ENCODE measurements at regions of chr12 and their contacts with region 1.

Region 1: DNA sequence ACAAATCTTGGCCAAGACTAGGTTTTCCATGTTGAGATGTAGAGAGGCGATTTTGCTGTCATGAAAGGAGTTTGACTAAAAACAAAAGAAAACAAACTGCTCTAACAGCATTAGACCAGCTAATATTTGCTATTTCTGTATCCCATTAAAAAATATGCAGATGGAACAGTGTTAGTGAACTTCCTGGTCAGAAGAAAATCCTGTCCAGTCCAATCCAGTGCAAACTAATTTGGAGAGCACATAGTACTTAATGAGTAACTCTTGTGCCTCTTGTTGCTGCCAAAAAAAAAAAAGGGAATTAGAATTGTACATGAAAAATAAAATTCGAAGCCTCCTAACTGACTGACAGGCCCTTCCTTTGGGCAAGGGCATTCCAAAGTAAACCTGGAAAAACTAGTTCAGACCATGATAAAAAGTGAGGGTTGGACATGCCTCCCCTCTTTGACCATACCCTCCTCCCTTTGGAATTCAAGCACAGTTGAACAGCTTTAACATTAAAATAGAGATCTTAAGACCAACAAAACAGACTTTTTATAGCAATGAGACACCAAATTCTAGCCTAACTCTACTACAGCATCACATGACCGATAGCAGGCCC is 298.9 kb downstream of the ETNK1 start:
- DNase-seq: no peak
- H3K4me3 Mint-ChIP-seq: no peak overlapping the region
- H3K27ac Mint-ChIP-seq: no peak overlapping the region
- H3K4me1 Mint-ChIP-seq: no peaks in the 10 kb centered on the region
- H3K27me3 Mint-ChIP-seq: no peaks in the 10 kb centered on the region

Region 2: GRCh38 chr12:22956690-22957089 is 32.8 kb after region 1 on chr12:
- CTCF ChIA-PET with region 1: no interaction called
- intact Hi-C with region 1: loop called (anchors 1 kb)
- DNase-seq: no peak
- H3K4me3 Mint-ChIP-seq: no peak overlapping the region
- H3K27ac Mint-ChIP-seq: no peak overlapping the region
- H3K4me1 Mint-ChIP-seq: no peaks in the 10 kb centered on the region
- H3K27me3 Mint-ChIP-seq: no peaks in the 10 kb centered on the region

Measured in activated naive CD4-positive, alpha-beta T cell treated with anti-CD3 and anti-CD28 coated beads for 36 hours (primary cell).